GM12878 (cell line): ENCODE measurements at regions of chr14 and their contacts with region 1.

Region 1: DNA sequence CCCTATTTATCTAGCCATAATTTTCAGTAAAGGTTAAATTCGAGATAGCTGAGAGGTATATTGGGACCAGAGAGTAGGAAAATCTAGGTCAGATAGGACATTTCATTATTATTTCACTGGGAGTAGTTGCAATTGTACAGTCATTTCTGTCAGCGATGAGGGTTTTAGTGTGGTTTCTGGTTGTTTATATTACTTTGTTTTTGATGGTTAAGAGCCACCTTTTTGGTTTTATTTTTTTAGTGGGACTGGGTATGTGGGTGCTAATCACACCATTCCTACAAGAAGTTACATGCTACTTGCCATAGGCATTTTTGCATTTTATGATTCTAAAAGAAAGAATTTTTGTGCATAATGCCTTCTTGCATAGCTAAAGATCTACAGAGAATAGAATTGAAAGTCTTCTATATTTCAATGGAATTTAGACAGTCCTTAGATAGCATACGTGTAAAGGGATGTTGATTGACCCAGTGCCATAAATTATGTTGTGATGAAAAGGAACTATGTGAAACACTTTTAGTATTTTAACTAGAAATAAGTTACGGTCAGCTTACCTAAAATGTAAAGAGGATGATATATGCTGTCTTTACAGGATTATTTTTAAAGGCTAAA is 85.2 kb downstream of the KTN1 start:
- DNase-seq: peak; percentile 3
- ATAC-seq: peak; percentile 72
- H3K4me3 ChIP-seq: no peak overlapping the region
- H3K27ac ChIP-seq: peak overlapping the region; percentile 4; the same call in 1 of the 2 replicates
- H3K4me1 ChIP-seq: peaks cover 8% of the 10 kb centered on the region
- H3K27me3 ChIP-seq: no peaks in the 10 kb centered on the region
- CTCF ChIP-seq: no peak
- EP300 ChIP-seq: no peak
- POLR2A ChIP-seq: no peak
- RAD21 ChIP-seq: no peak

Region 2: GRCh38 chr14:54462048-54462447 is 1203.1 kb before region 1 on chr14:
- CTCF ChIA-PET with region 1: no interaction called
- POLR2A ChIA-PET with region 1: no interaction called
- RAD21 ChIA-PET with region 1: no interaction called
- SMC1A ChIA-PET with region 1: no interaction called
- in situ Hi-C with region 1: no loop called
- intact Hi-C with region 1: no loop called
- DNase-seq: no peak
- ATAC-seq: no peak
- H3K4me3 ChIP-seq: no peak overlapping the region
- H3K27ac ChIP-seq: no peak overlapping the region
- H3K4me1 ChIP-seq: no peaks in the 10 kb centered on the region
- H3K27me3 ChIP-seq: no peaks in the 10 kb centered on the region
- CTCF ChIP-seq: no peak
- EP300 ChIP-seq: no peak
- POLR2A ChIP-seq: no peak
- RAD21 ChIP-seq: no peak

Region 3: DNA sequence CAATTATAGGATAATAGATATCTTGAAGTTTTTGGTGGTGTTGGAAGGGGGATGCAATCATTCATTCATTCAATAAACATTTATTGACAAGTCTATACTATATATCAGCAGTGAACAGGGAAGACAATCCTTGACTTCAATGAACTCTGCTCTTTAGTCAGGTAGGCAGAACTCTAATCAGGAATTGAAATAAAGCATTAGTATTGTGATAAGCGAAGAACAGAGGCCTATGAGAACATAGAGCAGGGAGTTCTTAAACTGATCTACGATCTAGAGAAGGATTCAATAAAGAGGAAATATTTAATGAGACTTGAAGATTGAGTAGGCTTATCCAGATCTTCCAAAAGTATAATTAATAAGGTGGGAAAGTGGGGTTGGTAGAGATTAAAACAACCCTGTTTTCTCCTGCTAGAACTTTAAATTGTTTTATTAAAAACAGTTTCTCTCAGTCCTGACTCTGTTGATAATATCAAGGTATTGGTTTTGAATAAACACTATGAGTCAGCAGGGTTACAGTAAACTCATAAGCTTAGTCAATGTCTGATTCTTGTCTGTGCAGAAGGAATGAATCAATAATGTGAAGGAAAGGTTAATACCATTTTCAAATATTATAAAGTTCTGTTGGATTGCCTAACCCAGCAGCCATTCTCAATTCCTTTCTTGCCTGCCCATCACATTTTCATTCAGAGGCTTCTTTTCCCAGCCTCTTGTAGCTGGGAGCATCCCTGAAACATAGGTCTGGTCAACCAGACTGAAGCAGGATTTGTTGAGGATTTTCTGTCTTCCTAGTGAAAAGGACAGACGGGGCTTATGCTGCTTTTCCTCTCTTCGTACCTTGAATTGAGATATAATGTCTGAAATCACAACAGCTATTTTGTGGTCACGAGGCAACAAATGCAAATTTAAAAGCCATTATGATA is 124.1 kb before region 1 on chr14:
- CTCF ChIA-PET with region 1: no interaction called
- POLR2A ChIA-PET with region 1: no interaction called
- RAD21 ChIA-PET with region 1: no interaction called
- SMC1A ChIA-PET with region 1: no interaction called
- in situ Hi-C with region 1: no loop called
- intact Hi-C with region 1: no loop called
- DNase-seq: no peak
- ATAC-seq: no peak
- H3K4me3 ChIP-seq: no peak overlapping the region
- H3K27ac ChIP-seq: no peak overlapping the region
- H3K4me1 ChIP-seq: no peaks in the 10 kb centered on the region; the same call in none of the 2 replicates
- H3K27me3 ChIP-seq: no peaks in the 10 kb centered on the region
- CTCF ChIP-seq: no peak
- EP300 ChIP-seq: no peak
- POLR2A ChIP-seq: no peak
- RAD21 ChIP-seq: no peak

Region 4: DNA sequence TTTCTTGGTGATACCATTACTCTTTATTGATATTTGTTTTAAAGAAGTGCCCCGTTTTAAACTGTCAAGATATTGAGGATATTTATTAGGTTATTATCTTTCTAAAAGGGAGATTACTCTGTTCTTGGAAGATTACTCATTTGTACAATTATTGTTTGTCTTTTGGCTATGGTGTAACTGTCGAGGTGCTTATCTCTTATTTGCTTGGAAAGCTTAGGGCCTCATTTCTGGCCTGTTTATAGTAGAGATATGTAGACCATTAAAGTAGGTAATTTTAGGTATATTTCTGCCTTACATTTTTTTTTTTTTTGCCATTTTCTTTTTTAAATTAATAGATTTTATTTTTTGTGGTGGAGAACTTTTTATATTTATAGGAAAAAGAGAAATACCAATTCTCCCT is 10.9 kb before region 1 on chr14:
- CTCF ChIA-PET with region 1: interaction called, 7 read pairs
- POLR2A ChIA-PET with region 1: no interaction called
- RAD21 ChIA-PET with region 1: no interaction called
- SMC1A ChIA-PET with region 1: interaction called, 11 read pairs
- in situ Hi-C with region 1: no loop called
- intact Hi-C with region 1: no loop called
- DNase-seq: no peak
- ATAC-seq: no peak
- H3K4me3 ChIP-seq: no peak overlapping the region
- H3K27ac ChIP-seq: no peak overlapping the region
- H3K4me1 ChIP-seq: no peaks in the 10 kb centered on the region
- H3K27me3 ChIP-seq: no peaks in the 10 kb centered on the region
- CTCF ChIP-seq: no peak
- EP300 ChIP-seq: no peak
- POLR2A ChIP-seq: no peak
- RAD21 ChIP-seq: no peak

Region 5: GRCh38 chr14:55881577-55882241 is 216.5 kb after region 1 on chr14:
- CTCF ChIA-PET with region 1: no interaction called
- POLR2A ChIA-PET with region 1: no interaction called
- RAD21 ChIA-PET with region 1: no interaction called
- SMC1A ChIA-PET with region 1: no interaction called
- in situ Hi-C with region 1: no loop called
- intact Hi-C with region 1: no loop called
- DNase-seq: no peak
- ATAC-seq: no peak
- H3K4me3 ChIP-seq: no peak overlapping the region
- H3K27ac ChIP-seq: no peak overlapping the region
- H3K4me1 ChIP-seq: no peaks in the 10 kb centered on the region
- H3K27me3 ChIP-seq: no peaks in the 10 kb centered on the region
- CTCF ChIP-seq: no peak
- EP300 ChIP-seq: no peak
- POLR2A ChIP-seq: no peak
- RAD21 ChIP-seq: no peak